ENCODE measurements at regions of chr12 and their contacts with region 1.

Region 1: GRCh38 chr12:96985480-96986362 is 78.7 kb downstream of the NEDD1 start:
- DNase-seq: peak; percentile 37 to 69 (median 57)
- ATAC-seq: peak; percentile 92
- H3K4me3 ChIP-seq: peak overlapping the region; percentile 15; the same call in 1 of the 2 replicates
- H3K27ac ChIP-seq: no peak overlapping the region
- H3K4me1 ChIP-seq: peaks cover 9 to 11% of the 10 kb centered on the region in 2 experiments
- H3K27me3 ChIP-seq: peaks cover 0 to 6% of the 10 kb centered on the region in 2 experiments; a peak in 2 of 5 replicates
- CTCF ChIP-seq: peak; percentile 62 to 83 (median 75)
- EP300 ChIP-seq: no peak
- POLR2A ChIP-seq: no peak
- RAD21 ChIP-seq: peak; percentile 50 to 72

Region 2: GRCh38 chr12:96578526-96579125 is 407.1 kb before region 1 on chr12:
- CTCF ChIA-PET with region 1: interaction called, 10 read pairs
- POLR2A ChIA-PET with region 1: no interaction called
- in situ Hi-C with region 1: loop called (anchors 5 kb)
- intact Hi-C with region 1: loop called (anchors 1 kb)
- DNase-seq: peak; percentile 10 to 59 (median 24)
- ATAC-seq: peak; percentile 85
- H3K4me3 ChIP-seq: no peak overlapping the region
- H3K27ac ChIP-seq: no peak overlapping the region
- H3K4me1 ChIP-seq: no peaks in the 10 kb centered on the region
- H3K27me3 ChIP-seq: no peaks in the 10 kb centered on the region
- CTCF ChIP-seq: peak; percentile 47 to 81 (median 50); a peak in 4 of 6 replicates
- EP300 ChIP-seq: no peak
- POLR2A ChIP-seq: no peak
- RAD21 ChIP-seq: peak; percentile 80 to 87

Region 3: GRCh38 chr12:96886998-96887677 is 98.6 kb before region 1 on chr12:
- CTCF ChIA-PET with region 1: no interaction called
- POLR2A ChIA-PET with region 1: no interaction called
- in situ Hi-C with region 1: no loop called
- intact Hi-C with region 1: loop called (anchors 5 kb)
- DNase-seq: peak in 1 of 4 experiments; percentile 11
- ATAC-seq: peak; percentile 78
- H3K4me3 ChIP-seq: no peak overlapping the region
- H3K27ac ChIP-seq: peak overlapping the region; percentile 66; the same call in 1 of the 3 replicates
- H3K4me1 ChIP-seq: no peaks in the 10 kb centered on the region; a peak in 3 of 5 replicates
- H3K27me3 ChIP-seq: no peaks in the 10 kb centered on the region
- CTCF ChIP-seq: no peak
- EP300 ChIP-seq: no peak
- POLR2A ChIP-seq: no peak
- RAD21 ChIP-seq: no peak

Region 4: DNA sequence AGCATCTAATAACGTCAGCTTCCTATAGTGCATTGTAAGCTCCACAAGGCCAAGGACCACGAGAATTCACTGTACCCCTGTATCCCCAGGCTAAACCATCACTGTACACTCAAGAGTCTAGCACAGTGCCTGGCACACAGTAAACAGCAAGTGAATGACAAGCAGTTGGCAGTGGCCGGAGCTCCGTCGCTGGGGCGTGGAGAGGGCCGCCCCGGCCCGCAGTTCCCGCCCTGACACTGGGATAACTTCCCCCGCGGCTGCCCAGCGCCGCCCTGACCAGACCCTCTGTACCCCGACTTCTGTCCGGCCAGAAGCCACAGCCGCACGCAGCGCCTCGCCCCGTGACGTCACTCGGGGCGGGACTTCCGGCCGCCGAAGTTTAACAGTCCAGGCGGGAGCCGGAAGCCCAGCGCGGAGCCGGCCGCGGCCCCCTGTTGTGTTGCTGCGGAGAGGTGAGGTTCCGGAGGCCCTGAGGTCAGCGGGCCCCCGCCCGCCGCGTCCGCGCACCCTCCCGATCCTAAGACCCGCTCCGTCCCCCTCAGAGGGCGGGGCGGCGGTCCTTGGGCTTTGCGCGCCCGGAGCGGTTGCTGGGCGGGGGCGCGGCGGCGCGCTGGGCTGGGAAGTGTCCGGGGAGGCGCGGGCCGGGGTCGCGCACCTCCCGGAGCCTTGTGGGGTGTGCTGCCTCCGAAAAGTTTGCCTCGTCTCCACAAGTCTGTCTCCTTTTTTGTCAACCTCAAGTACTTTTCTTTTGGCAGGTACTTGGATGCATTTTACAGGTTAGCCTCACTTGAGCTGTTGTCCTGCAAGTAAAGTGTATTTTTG is 78.7 kb before region 1 on chr12 and contains the start of gene NEDD1:
- CTCF ChIA-PET with region 1: no interaction called
- POLR2A ChIA-PET with region 1: no interaction called
- in situ Hi-C with region 1: no loop called
- intact Hi-C with region 1: loop called (anchors 1 kb)
- DNase-seq: peak; percentile 93 to 95 (median 94)
- ATAC-seq: peak; percentile 98
- H3K4me3 ChIP-seq: peak within 1 kb of the TSS; percentile 68
- H3K27ac ChIP-seq: peak within 1 kb of the TSS; percentile 85
- H3K4me1 ChIP-seq: peaks cover 8 to 12% of the 10 kb centered on the region in 2 experiments; a peak in 4 of 5 replicates
- H3K27me3 ChIP-seq: no peaks in the 10 kb centered on the region
- CTCF ChIP-seq: no peak
- EP300 ChIP-seq: no peak
- POLR2A ChIP-seq: peak; percentile 83
- RAD21 ChIP-seq: no peak
- polyA plus RNA-seq, gene NEDD1: 10.5 to 14.8 TPM

Region 5: DNA sequence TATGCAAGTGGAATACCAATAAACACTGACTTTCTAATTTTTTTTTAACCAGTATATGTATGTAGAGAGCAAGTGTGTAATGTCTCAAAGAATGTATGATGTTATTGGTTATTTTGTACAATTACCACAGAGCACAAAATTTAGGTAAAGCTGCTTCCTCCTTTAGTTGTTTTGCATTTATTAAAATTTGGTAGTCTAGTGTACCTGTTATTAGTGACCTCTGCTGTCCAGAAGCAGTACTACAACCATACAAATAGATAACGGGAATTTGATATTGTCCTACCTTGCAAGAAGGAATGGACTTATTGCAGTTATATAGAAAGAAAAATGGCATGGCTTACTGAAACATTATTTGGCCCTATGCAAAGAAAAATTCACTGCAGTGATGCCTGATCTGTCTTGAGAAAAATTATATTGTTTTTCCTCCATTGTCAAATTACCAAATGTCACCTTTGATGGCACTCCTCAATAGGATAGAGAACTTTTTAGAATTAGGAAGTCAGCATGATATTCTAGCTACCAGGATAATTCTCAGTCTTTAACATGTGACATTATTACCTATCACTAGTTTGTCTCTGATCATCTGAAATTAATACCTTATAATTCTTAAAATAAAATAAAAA is 323.0 kb after region 1 on chr12:
- CTCF ChIA-PET with region 1: no interaction called
- POLR2A ChIA-PET with region 1: no interaction called
- in situ Hi-C with region 1: no loop called
- intact Hi-C with region 1: loop called (anchors 1 kb)
- DNase-seq: peak; percentile 8 to 50 (median 22)
- ATAC-seq: no peak
- H3K4me3 ChIP-seq: no peak overlapping the region
- H3K27ac ChIP-seq: no peak overlapping the region
- H3K4me1 ChIP-seq: no peaks in the 10 kb centered on the region
- H3K27me3 ChIP-seq: no peaks in the 10 kb centered on the region
- CTCF ChIP-seq: peak; percentile 11 to 51 (median 36); a peak in 3 of 6 replicates
- EP300 ChIP-seq: no peak
- POLR2A ChIP-seq: no peak
- RAD21 ChIP-seq: peak; percentile 49 to 53

Region 6: GRCh38 chr12:98373025-98373554 is 1387.4 kb after region 1 on chr12:
- CTCF ChIA-PET with region 1: interaction called, 6 read pairs
- POLR2A ChIA-PET with region 1: no interaction called
- in situ Hi-C with region 1: no loop called
- intact Hi-C with region 1: loop called (anchors 1 kb)
- DNase-seq: peak; percentile 26 to 65 (median 38)
- ATAC-seq: peak; percentile 90
- H3K4me3 ChIP-seq: no peak overlapping the region
- H3K27ac ChIP-seq: no peak overlapping the region
- H3K4me1 ChIP-seq: no peaks in the 10 kb centered on the region; a peak in 1 of 5 replicates
- H3K27me3 ChIP-seq: no peaks in the 10 kb centered on the region
- CTCF ChIP-seq: peak; percentile 55 to 77 (median 56); a peak in 5 of 6 replicates
- EP300 ChIP-seq: no peak
- POLR2A ChIP-seq: no peak
- RAD21 ChIP-seq: peak; percentile 68 to 86

Measured in K562 (cell line).